AG04449 (cell line): ENCODE measurements at regions of chr10 and their contacts with region 1.

Region 1: GRCh38 chr10:116683821-116684220 is 58.5 kb downstream of the HSPA12A start:
- DNase-seq: no peak
- H3K4me3 ChIP-seq: no peak overlapping the region
- CTCF ChIP-seq: no peak

Region 2: GRCh38 chr10:116637830-116638229 is 46.0 kb before region 1 on chr10:
- CTCF ChIA-PET with region 1: no interaction called
- POLR2A ChIA-PET with region 1: no interaction called
- DNase-seq: no peak
- H3K4me3 ChIP-seq: no peak overlapping the region
- CTCF ChIP-seq: no peak

Region 3: DNA sequence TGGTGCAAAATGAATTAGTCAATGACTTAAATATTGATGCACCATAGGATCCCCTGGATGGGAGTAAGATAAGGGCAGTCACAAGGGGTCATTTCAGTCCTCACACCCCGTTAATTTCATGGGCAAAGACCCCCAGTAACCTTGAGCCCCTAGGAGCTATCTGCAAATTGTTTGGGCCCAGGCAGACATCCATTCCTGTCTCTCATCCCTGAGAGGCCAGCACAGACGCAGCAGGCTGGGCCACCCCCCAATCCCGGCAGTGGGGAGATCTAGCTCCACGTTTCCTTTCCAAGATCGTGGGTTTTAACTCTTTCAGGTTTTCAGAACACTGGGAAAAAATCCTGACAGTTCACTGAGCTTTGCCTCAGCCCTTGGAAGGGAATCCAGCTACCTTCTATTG is 23.0 kb before region 1 on chr10:
- CTCF ChIA-PET with region 1: interaction called, 11 read pairs
- POLR2A ChIA-PET with region 1: no interaction called
- DNase-seq: no peak
- H3K4me3 ChIP-seq: no peak overlapping the region
- CTCF ChIP-seq: no peak

Region 4: DNA sequence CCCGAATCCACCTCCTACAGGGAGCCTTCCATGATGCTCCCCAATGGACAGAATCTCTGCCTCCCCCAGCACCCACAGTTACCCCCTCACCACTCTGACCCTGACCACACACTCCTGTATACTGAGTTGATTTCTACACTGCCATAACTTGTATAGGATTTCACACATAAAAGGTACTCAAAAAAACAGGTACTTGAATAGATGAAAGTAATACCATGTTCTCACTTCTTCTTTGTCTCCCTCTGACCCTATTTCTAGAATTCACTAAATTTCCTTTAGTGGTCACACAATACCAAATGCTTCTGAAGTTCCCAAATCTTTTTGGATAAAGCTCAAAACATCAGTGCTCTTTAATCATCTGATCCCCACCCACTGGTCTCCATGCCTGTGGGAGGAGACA is 13.1 kb after region 1 on chr10:
- CTCF ChIA-PET with region 1: interaction called, 26 read pairs
- POLR2A ChIA-PET with region 1: no interaction called
- DNase-seq: no peak
- H3K4me3 ChIP-seq: no peak overlapping the region
- CTCF ChIP-seq: no peak

Region 5: GRCh38 chr10:116708391-116708821 is 24.6 kb after region 1 on chr10:
- CTCF ChIA-PET with region 1: interaction called, 13 read pairs
- POLR2A ChIA-PET with region 1: interaction called, 3 read pairs
- DNase-seq: peak; percentile 66
- H3K4me3 ChIP-seq: no peak overlapping the region
- CTCF ChIP-seq: no peak

Region 6: GRCh38 chr10:116796910-116797513 is 113.2 kb after region 1 on chr10:
- CTCF ChIA-PET with region 1: interaction called, 658 read pairs
- POLR2A ChIA-PET with region 1: no interaction called
- DNase-seq: no peak
- H3K4me3 ChIP-seq: no peak overlapping the region
- CTCF ChIP-seq: peak; percentile 87